ENCODE measurements at regions of chr4 and their contacts with region 1.

Region 1: DNA sequence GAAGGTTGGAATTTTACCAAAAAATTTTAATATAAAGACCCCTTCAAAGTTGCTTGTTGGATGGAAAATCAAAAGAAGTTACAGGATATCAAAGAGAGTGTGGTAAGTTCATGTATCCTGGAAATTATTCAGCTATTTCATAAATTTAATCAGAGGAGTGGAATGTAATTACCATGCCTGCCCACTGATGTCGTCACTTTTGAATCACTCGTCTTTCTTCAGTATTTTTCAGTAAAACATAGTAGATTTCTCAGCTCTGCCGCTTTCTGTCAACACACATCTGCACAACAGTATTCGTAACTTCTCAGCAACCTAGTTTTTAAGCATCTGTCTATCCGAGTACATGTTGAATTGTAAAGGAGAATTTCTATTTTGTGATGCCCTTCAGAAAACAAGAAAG is 2163.0 kb upstream of the AGA start:
- DNase-seq: no peak
- H3K4me3 ChIP-seq: no peak overlapping the region
- H3K27ac ChIP-seq: no peak overlapping the region
- H3K4me1 ChIP-seq: no peaks in the 10 kb centered on the region
- H3K27me3 ChIP-seq: no peaks in the 10 kb centered on the region
- CTCF ChIP-seq: no peak
- POLR2A ChIP-seq: no peak

Region 2: GRCh38 chr4:177660223-177660622 is 1945.0 kb before region 1 on chr4:
- intact Hi-C with region 1: no loop called
- DNase-seq: no peak
- H3K4me3 ChIP-seq: no peak overlapping the region
- H3K27ac ChIP-seq: no peak overlapping the region
- H3K4me1 ChIP-seq: no peaks in the 10 kb centered on the region
- H3K27me3 ChIP-seq: no peaks in the 10 kb centered on the region
- CTCF ChIP-seq: no peak
- POLR2A ChIP-seq: no peak

Region 3: DNA sequence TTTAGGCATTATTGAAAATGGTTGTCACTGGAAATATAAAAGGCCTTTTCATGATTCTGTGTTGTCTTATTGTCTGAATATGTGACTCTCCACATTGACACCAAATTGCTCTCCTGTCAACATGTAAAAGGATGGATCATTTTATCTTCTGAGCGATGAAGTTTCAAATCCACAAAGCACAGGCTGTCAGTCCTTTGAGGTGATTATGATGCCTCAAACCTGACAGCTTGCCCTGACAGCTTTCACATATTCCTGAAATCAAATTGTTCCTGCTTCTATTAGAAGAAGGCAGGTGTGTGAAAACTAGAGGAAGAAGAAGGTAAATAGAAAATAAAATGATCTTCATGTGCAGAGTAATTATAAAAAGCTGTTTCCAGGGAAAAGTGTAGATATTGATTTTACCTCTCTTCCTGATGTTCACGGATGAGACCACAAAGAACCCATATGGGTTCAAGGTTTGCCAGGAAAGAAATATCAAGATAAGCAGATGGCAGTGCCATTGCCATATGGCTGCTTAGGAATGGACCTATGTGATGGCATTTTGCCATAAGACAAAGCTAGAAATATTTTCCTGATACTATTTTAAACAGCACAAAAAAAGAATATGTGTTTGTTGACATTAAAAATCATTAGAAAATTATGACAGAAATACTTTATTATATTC is 1156.7 kb before region 1 on chr4:
- intact Hi-C with region 1: no loop called
- DNase-seq: no peak
- H3K4me3 ChIP-seq: no peak overlapping the region
- H3K27ac ChIP-seq: no peak overlapping the region
- H3K4me1 ChIP-seq: no peaks in the 10 kb centered on the region
- H3K27me3 ChIP-seq: no peaks in the 10 kb centered on the region
- CTCF ChIP-seq: no peak
- POLR2A ChIP-seq: no peak

Region 4: GRCh38 chr4:179569549-179569948 is 35.6 kb before region 1 on chr4:
- intact Hi-C with region 1: loop called (anchors 2 kb)
- DNase-seq: no peak
- H3K4me3 ChIP-seq: no peak overlapping the region
- H3K27ac ChIP-seq: no peak overlapping the region
- H3K4me1 ChIP-seq: no peaks in the 10 kb centered on the region
- H3K27me3 ChIP-seq: no peaks in the 10 kb centered on the region
- CTCF ChIP-seq: no peak
- POLR2A ChIP-seq: no peak

Measured in breast epithelium (tissue), 4 donors.